Colonic mucosa (tissue), 4 donors: ENCODE measurements at regions of chr3 and their contacts with region 1.

Region 1: DNA sequence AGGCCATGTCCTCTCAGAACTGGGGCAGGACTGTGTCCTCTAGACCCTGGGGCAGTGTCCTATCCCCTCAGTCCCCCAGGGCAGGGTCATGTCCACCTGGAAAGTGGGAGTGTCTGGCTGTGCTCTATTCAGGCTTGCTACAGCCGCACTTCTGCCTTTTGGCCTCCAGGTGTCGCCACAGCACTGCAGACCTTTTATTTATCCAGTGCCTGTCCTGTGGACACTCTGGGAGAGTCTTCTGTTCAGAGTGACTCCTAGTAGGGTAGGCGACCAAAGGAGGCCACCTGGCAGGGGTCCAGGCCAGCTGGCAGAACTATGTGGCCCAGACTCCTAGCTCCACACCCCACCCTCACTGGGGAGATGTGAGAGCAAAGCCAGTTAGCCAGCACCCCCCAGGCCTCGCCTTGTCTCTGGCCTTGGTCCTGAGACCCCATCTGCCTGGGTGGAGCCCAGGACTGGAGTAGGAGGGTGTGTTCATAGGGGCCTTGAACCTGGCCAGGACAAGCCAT is 3.9 kb downstream of the TMIE start:
- DNase-seq: peak; percentile 75
- H3K4me3 ChIP-seq: no peak overlapping the region
- H3K27ac ChIP-seq: no peak overlapping the region
- H3K4me1 ChIP-seq: no peaks in the 10 kb centered on the region
- H3K27me3 ChIP-seq: peaks cover 18% of the 10 kb centered on the region
- CTCF ChIP-seq: peak; percentile 97

Region 2: GRCh38 chr3:46629551-46630517 is 75.2 kb before region 1 on chr3:
- intact Hi-C with region 1: no loop called
- DNase-seq: peak; percentile 79
- H3K4me3 ChIP-seq: no peak overlapping the region
- H3K27ac ChIP-seq: peak overlapping the region; percentile 60
- H3K4me1 ChIP-seq: peaks cover 3% of the 10 kb centered on the region
- H3K27me3 ChIP-seq: no peaks in the 10 kb centered on the region
- CTCF ChIP-seq: peak; percentile 96

Region 3: GRCh38 chr3:46895204-46895660 is 190.2 kb after region 1 on chr3:
- intact Hi-C with region 1: loop called (anchors 2 kb)
- DNase-seq: peak; percentile 72
- H3K4me3 ChIP-seq: no peak overlapping the region
- H3K27ac ChIP-seq: no peak overlapping the region
- H3K4me1 ChIP-seq: no peaks in the 10 kb centered on the region
- H3K27me3 ChIP-seq: peaks cover 16% of the 10 kb centered on the region
- CTCF ChIP-seq: peak; percentile 86

Region 4: DNA sequence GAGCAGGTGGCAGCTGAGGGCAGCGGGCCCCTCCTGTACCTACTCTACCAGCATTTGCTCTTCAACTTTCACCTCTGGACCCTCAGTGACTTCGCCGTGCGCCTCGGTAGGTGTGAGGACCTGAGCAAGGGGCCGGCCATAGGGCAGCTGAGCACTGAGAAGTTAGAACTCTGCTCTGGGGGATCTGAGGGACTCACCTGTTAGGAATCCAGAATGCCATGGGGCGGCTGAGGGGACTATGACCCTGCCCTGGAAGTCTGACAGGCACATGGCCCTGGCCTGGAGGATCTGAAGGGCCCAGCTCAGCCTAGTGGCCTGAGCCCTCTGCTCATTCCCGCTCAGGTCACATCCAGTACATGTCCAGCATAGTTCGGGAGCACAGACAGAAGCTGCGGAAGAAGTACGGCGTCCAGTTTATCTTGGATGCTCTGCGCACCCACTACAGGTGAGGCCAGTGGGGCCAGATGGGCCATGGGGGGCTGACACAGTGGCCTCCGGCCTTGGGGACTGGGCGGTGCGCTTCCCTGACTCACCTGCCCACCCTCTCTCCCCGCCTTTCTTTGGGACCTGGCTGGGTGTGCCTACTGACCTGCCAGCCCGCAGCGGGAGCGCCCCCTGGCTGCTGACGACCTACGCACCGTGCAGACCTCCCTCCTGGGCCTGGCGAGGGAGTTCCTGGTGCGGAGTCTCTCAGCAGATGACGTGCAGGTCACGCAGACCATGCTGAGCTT is 293.2 kb after region 1 on chr3:
- intact Hi-C with region 1: loop called (anchors 5 kb)
- DNase-seq: peak; percentile 78
- H3K4me3 ChIP-seq: no peak overlapping the region
- H3K27ac ChIP-seq: no peak overlapping the region
- H3K4me1 ChIP-seq: no peaks in the 10 kb centered on the region
- H3K27me3 ChIP-seq: no peaks in the 10 kb centered on the region
- CTCF ChIP-seq: peak; percentile 80

Region 5: GRCh38 chr3:47324278-47324865 is 619.3 kb after region 1 on chr3:
- intact Hi-C with region 1: loop called (anchors 10 kb)
- DNase-seq: peak; percentile 67
- H3K4me3 ChIP-seq: no peak overlapping the region
- H3K27ac ChIP-seq: no peak overlapping the region
- H3K4me1 ChIP-seq: no peaks in the 10 kb centered on the region
- H3K27me3 ChIP-seq: no peaks in the 10 kb centered on the region
- CTCF ChIP-seq: peak; percentile 78